BJ (cell line): ENCODE measurements at regions of chr2 and their contacts with region 1.

Region 1: GRCh38 chr2:67954093-67954748 is 108.6 kb downstream of the C1D start:
- DNase-seq: no peak
- H3K4me3 ChIP-seq: no peak overlapping the region
- H3K27me3 ChIP-seq: no peaks in the 10 kb centered on the region
- CTCF ChIP-seq: no peak

Region 2: GRCh38 chr2:68272246-68272994 is 318.2 kb after region 1 on chr2:
- CTCF ChIA-PET with region 1: no interaction called
- POLR2A ChIA-PET with region 1: interaction called, 13 read pairs
- DNase-seq: no peak
- H3K4me3 ChIP-seq: no peak overlapping the region
- H3K27me3 ChIP-seq: no peaks in the 10 kb centered on the region
- CTCF ChIP-seq: no peak